CD8-positive, alpha-beta T cell (primary cell): ENCODE measurements at regions of chr1 and their contacts with region 1.

Region 1: DNA sequence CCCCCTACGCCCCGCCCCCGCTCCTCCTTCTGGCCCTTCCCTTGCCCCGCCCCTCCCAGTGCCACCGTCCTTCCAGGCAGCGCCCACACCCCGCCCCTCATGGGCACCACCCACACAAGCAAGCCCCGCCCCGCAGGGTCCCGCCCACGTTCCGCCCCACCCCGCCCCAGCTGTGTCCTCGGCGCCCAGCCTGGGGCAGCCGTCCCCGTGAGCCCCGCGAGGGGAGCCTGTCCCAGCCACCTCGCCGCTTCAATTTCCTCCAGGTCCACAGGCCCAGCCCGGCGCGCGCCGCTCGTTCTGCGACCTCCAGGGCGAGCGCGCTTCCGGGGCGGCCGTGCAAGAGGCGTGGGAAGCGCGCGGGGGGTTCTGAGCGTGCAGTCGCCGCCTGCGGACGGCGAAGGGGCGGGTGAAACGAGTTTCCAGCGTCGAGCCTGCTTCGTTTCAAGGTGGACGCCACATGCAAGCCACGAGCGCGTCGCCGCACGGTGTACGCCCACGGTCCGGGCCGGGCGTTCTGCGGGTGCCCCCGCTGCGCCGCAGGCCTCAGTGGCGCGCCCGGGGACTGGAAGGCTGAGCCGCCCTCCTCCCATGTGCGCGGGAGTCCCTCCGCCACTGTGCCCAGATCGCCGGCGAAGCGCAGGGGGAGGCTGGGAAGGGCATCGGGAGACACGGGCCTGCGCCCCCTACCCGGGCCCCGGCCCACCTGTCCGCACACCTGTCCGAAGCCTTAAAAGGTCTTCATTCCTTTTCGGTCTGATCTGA is 10.8 kb upstream of the FAAP20 start:
- DNase-seq: peak; percentile 91 to 97 (median 95)
- ATAC-seq: peak; percentile 93
- H3K4me3 ChIP-seq: peak overlapping the region; percentile 39 to 61
- H3K4me3 Mint-ChIP-seq: peak overlapping the region; percentile 69
- H3K27ac ChIP-seq: peak overlapping the region; percentile 19 to 47
- H3K27ac Mint-ChIP-seq: no peak overlapping the region
- H3K4me1 ChIP-seq: peaks cover 14% of the 10 kb centered on the region
- H3K4me1 Mint-ChIP-seq: peaks cover 8% of the 10 kb centered on the region
- H3K27me3 ChIP-seq: no peaks in the 10 kb centered on the region
- H3K27me3 Mint-ChIP-seq: no peaks in the 10 kb centered on the region
- CTCF ChIP-seq: no peak

Region 2: DNA sequence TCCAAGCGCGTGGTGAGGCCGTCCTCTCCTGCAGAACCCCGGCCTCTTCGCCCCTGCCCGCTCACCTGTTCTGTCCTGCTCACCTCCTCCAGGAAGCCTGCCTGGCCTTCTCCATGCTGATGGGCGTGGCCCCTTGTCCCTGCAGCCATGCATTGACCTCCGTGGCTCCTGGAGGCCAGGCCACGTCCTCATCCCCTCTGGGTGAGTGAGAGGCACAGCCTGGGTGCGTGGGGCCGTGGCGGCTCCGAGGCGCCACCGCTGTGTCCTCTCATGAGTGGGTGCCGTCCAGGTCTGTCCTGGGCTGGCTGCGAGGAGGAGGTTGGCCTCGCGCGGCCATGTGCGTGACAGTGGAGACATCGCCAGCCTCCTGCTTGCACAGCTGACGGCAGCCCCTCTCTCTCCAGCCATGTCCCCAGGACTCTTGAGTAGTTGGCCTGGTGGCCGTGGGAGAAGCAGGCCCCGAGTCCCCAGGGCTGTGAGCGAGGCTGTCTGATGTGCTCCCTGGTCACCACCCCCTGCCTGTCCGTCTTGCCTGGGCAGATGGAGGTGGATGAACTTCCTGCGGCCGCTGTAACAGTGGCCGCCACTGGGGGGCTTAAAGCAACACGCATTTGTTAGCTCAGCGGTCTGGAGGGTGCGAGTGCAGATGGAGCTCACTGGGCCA is 97.0 kb before region 1 on chr1:
- CTCF ChIA-PET with region 1: no interaction called
- POLR2A ChIA-PET with region 1: no interaction called
- intact Hi-C with region 1: no loop called
- DNase-seq: no peak
- ATAC-seq: no peak
- H3K4me3 ChIP-seq: no peak overlapping the region
- H3K4me3 Mint-ChIP-seq: no peak overlapping the region
- H3K27ac ChIP-seq: no peak overlapping the region
- H3K27ac Mint-ChIP-seq: no peak overlapping the region
- H3K4me1 ChIP-seq: no peaks in the 10 kb centered on the region
- H3K4me1 Mint-ChIP-seq: no peaks in the 10 kb centered on the region
- H3K27me3 ChIP-seq: no peaks in the 10 kb centered on the region
- H3K27me3 Mint-ChIP-seq: no peaks in the 10 kb centered on the region
- CTCF ChIP-seq: no peak

Region 3: GRCh38 chr1:2189459-2190425 is 15.6 kb before region 1 on chr1:
- CTCF ChIA-PET with region 1: interaction called, 9 read pairs
- POLR2A ChIA-PET with region 1: no interaction called
- intact Hi-C with region 1: loop called in 1 of 2 experiments (anchors 1 kb)
- DNase-seq: peak; percentile 83 to 94 (median 90)
- ATAC-seq: peak; percentile 93
- H3K4me3 ChIP-seq: peak overlapping the region; percentile 54 to 61
- H3K4me3 Mint-ChIP-seq: peak overlapping the region; percentile 80
- H3K27ac ChIP-seq: peak overlapping the region; percentile 70 to 77
- H3K27ac Mint-ChIP-seq: peak overlapping the region; percentile 98
- H3K4me1 ChIP-seq: peaks cover 16% of the 10 kb centered on the region
- H3K4me1 Mint-ChIP-seq: peaks cover 17% of the 10 kb centered on the region
- H3K27me3 ChIP-seq: no peaks in the 10 kb centered on the region
- H3K27me3 Mint-ChIP-seq: no peaks in the 10 kb centered on the region
- CTCF ChIP-seq: no peak

Region 4: GRCh38 chr1:2255420-2256369 is 50.3 kb after region 1 on chr1:
- CTCF ChIA-PET with region 1: no interaction called
- POLR2A ChIA-PET with region 1: interaction called, 4 read pairs
- intact Hi-C with region 1: loop called (anchors 1 to 2 kb)
- DNase-seq: peak; percentile 59 to 97 (median 75)
- ATAC-seq: peak; percentile 66
- H3K4me3 ChIP-seq: no peak overlapping the region
- H3K4me3 Mint-ChIP-seq: no peak overlapping the region
- H3K27ac ChIP-seq: peak overlapping the region; percentile 97 to 100
- H3K27ac Mint-ChIP-seq: no peak overlapping the region
- H3K4me1 ChIP-seq: peaks cover 86% of the 10 kb centered on the region
- H3K4me1 Mint-ChIP-seq: peaks cover 54% of the 10 kb centered on the region
- H3K27me3 ChIP-seq: no peaks in the 10 kb centered on the region
- H3K27me3 Mint-ChIP-seq: no peaks in the 10 kb centered on the region
- CTCF ChIP-seq: no peak

Region 5: DNA sequence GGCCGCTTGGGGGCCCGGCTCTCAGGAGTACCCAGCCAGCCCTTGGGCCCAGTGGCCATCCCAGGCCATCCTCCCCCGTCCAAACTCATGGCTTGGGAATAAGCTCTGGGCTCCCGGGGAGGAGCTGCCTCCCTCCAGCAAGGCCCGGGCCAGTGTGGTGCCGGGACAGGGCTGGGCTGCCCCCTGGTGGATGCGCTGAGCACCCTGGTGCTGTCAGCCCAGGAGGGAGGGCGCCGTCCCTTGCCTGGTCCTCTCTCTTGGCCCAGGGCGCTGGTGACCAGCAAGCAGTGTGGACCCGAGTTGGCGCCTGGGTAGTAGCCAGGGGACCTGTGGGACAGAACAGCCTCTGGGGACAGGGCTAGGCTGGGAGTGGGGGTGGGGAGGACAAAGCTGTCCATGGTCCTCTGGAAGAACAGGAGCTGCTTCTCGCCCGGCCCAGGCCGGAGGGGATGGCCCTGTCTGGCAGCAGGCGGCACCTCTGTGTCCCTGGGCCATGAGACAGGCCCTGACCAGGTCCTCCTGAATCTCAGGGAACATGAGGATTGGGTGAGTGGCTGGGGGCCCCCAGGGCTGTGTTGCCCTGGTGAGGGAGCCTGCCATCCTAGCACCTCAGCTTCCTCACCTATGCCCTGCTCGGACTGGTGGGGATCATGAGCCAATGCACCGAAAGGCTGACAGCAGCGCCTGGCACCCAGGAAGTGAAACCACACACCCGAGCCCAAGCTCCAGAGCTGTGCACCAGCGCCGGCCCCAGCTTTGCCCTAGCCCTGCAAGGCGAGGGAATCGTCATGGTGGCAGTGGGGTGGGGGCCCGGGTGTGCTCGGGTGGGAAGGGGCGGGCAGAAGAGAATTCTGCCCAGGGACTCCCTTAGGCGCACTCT is 176.6 kb after region 1 on chr1:
- CTCF ChIA-PET with region 1: interaction called, 332 read pairs
- POLR2A ChIA-PET with region 1: no interaction called
- intact Hi-C with region 1: no loop called
- DNase-seq: peak; percentile 59 to 87 (median 78)
- ATAC-seq: peak; percentile 97
- H3K4me3 ChIP-seq: no peak overlapping the region
- H3K4me3 Mint-ChIP-seq: no peak overlapping the region
- H3K27ac ChIP-seq: no peak overlapping the region
- H3K27ac Mint-ChIP-seq: no peak overlapping the region
- H3K4me1 ChIP-seq: peaks cover 15% of the 10 kb centered on the region
- H3K4me1 Mint-ChIP-seq: peaks cover 3% of the 10 kb centered on the region
- H3K27me3 ChIP-seq: no peaks in the 10 kb centered on the region
- H3K27me3 Mint-ChIP-seq: no peaks in the 10 kb centered on the region
- CTCF ChIP-seq: peak; percentile 71

Region 6: GRCh38 chr1:2642560-2643413 is 437.4 kb after region 1 on chr1:
- CTCF ChIA-PET with region 1: no interaction called
- POLR2A ChIA-PET with region 1: no interaction called
- intact Hi-C with region 1: loop called in 1 of 2 experiments (anchors 5 kb)
- DNase-seq: peak; percentile 88 to 97 (median 96)
- ATAC-seq: peak; percentile 84
- H3K4me3 ChIP-seq: peak overlapping the region; percentile 63 to 95
- H3K4me3 Mint-ChIP-seq: peak overlapping the region; percentile 85
- H3K27ac ChIP-seq: peak overlapping the region; percentile 91 to 93
- H3K27ac Mint-ChIP-seq: peak overlapping the region; percentile 88
- H3K4me1 ChIP-seq: peaks cover 17% of the 10 kb centered on the region
- H3K4me1 Mint-ChIP-seq: peaks cover 13% of the 10 kb centered on the region
- H3K27me3 ChIP-seq: no peaks in the 10 kb centered on the region
- H3K27me3 Mint-ChIP-seq: no peaks in the 10 kb centered on the region
- CTCF ChIP-seq: no peak